Mammary epithelial cell (primary cell): ENCODE measurements at regions of chr2 and their contacts with region 1.

Region 1: GRCh38 chr2:229133155-229133772 is 137.8 kb downstream of the PID1 start:
- DNase-seq: peak; percentile 40
- H3K4me3 ChIP-seq: no peak overlapping the region
- H3K27ac ChIP-seq: no peak overlapping the region
- H3K4me1 ChIP-seq: no peaks in the 10 kb centered on the region
- H3K27me3 ChIP-seq: no peaks in the 10 kb centered on the region
- CTCF ChIP-seq: peak; percentile 46 to 77

Region 2: DNA sequence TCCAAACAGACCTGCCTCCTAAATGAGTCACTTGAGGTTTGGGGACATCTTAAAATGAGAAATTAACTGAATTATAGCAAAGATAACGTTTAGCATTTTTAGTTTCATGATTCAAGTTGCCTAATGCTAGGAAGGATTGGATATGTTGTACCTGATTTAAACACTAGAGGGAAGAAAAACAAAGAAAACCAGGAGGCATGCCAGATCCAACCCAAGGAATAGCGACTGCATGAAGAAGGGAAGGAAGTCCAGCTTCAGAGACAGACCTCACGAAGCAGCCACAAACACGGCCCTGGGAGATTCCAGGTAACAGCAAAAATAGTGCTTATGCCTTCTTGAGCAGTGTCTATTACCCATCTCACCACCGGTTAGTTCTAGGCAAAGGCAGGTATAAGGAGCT is 451.8 kb before region 1 on chr2:
- CTCF ChIA-PET with region 1: no interaction called
- dilution Hi-C with region 1: no loop called
- in situ Hi-C with region 1: no loop called
- intact Hi-C with region 1: loop called (anchors 5 kb)
- DNase-seq: peak; percentile 42
- H3K4me3 ChIP-seq: no peak overlapping the region
- H3K27ac ChIP-seq: no peak overlapping the region
- H3K4me1 ChIP-seq: no peaks in the 10 kb centered on the region
- H3K27me3 ChIP-seq: peaks cover 3% of the 10 kb centered on the region
- CTCF ChIP-seq: peak; percentile 49 to 60

Region 3: GRCh38 chr2:229071292-229071976 is 61.8 kb before region 1 on chr2:
- CTCF ChIA-PET with region 1: no interaction called
- dilution Hi-C with region 1: no loop called
- in situ Hi-C with region 1: no loop called
- intact Hi-C with region 1: no loop called
- DNase-seq: no peak
- H3K4me3 ChIP-seq: no peak overlapping the region
- H3K27ac ChIP-seq: no peak overlapping the region
- H3K4me1 ChIP-seq: no peaks in the 10 kb centered on the region
- H3K27me3 ChIP-seq: no peaks in the 10 kb centered on the region
- CTCF ChIP-seq: no peak

Region 4: DNA sequence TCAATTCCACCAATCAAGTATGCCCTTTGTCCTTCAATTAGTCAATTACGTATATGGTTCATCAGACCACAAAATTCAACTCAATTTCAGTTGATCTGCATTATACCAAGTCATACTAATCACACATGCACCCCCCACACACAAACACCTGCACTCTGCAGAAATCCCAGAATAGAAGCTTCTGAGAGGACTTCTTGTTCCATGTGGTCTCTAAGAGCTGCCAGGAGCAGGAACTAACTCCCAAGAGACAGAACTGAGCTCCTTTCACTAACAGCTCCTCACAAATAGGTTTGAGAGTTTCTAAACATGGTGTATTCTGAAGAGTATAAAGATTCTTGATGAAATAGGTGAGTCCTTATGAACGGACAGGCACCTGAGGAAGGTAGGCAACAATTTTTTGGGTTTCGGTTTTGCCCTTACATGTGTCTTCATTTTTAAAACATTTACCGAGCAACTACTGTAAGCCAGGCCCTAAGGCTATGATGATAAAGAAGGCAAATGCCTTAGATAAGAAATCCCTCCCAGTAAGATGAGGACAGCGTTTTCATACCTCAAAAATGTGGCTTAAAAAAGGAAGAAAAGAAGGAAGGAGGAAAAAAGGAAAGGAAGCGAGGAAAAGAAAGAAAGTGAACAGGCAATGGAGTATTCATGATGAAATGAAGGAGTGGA is 45.3 kb before region 1 on chr2:
- CTCF ChIA-PET with region 1: no interaction called
- dilution Hi-C with region 1: loop called (anchors 5 kb)
- in situ Hi-C with region 1: no loop called
- intact Hi-C with region 1: no loop called
- DNase-seq: no peak
- H3K4me3 ChIP-seq: no peak overlapping the region
- H3K27ac ChIP-seq: no peak overlapping the region
- H3K4me1 ChIP-seq: no peaks in the 10 kb centered on the region
- H3K27me3 ChIP-seq: no peaks in the 10 kb centered on the region
- CTCF ChIP-seq: no peak

Region 5: DNA sequence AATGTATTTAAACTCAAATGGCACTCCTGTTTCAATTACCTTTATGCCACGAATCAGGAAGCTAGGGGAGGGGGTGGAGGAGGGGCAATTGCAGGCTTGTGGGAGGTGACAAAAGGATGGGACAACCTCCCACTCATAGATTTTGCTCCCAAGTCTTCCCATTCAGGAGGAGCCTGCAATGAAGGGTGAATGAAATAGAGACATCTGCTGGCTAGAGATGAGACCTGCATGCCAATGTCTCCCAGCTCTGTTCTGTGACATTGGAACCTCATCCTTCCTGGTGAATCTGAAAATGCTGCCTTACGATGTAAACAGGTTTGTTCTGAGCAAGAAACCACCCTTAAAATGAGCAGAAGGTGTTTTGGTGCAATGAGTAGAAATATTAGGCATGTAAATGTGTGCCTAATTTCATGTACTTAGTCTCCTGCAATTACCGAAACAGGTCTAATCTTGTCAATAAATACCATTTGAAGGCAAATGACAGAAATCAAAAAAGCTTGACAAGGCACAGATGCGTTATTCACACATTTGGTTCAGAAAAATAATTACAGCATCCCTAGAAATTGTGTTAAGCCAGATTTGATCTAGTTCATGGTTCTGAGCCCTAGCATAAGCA is 140.6 kb after region 1 on chr2:
- CTCF ChIA-PET with region 1: no interaction called
- dilution Hi-C with region 1: no loop called
- in situ Hi-C with region 1: no loop called
- intact Hi-C with region 1: loop called (anchors 1 kb)
- DNase-seq: peak; percentile 72
- H3K4me3 ChIP-seq: peak overlapping the region; percentile 14 to 22 (median 21)
- H3K27ac ChIP-seq: no peak overlapping the region
- H3K4me1 ChIP-seq: peaks cover 13% of the 10 kb centered on the region
- H3K27me3 ChIP-seq: no peaks in the 10 kb centered on the region
- CTCF ChIP-seq: peak; percentile 79 to 85

Region 6: DNA sequence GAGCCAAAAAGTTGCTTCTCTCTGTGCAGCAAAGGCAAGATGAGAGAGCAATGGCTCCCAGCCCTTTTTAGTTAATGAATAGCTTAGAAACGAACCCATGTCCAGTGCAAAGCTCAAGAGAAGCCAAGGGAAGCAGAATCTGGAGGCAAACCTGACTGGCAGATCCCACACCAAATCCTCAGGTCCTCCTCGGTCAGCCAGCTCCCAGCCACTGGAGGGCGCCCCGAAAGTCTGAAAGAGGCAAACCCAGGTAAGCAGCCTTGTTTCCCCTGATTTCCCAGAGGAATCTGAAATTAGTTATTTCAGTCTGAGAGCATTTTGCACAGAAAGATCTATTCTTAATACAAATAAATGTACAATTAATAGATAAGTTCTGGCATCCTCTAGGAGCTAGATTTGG is 209.1 kb after region 1 on chr2:
- CTCF ChIA-PET with region 1: no interaction called
- dilution Hi-C with region 1: no loop called
- in situ Hi-C with region 1: no loop called
- intact Hi-C with region 1: loop called (anchors 1 kb)
- DNase-seq: peak; percentile 55
- H3K4me3 ChIP-seq: no peak overlapping the region
- H3K27ac ChIP-seq: no peak overlapping the region
- H3K4me1 ChIP-seq: peaks cover 12% of the 10 kb centered on the region
- H3K27me3 ChIP-seq: no peaks in the 10 kb centered on the region
- CTCF ChIP-seq: peak; percentile 69 to 73

Region 7: DNA sequence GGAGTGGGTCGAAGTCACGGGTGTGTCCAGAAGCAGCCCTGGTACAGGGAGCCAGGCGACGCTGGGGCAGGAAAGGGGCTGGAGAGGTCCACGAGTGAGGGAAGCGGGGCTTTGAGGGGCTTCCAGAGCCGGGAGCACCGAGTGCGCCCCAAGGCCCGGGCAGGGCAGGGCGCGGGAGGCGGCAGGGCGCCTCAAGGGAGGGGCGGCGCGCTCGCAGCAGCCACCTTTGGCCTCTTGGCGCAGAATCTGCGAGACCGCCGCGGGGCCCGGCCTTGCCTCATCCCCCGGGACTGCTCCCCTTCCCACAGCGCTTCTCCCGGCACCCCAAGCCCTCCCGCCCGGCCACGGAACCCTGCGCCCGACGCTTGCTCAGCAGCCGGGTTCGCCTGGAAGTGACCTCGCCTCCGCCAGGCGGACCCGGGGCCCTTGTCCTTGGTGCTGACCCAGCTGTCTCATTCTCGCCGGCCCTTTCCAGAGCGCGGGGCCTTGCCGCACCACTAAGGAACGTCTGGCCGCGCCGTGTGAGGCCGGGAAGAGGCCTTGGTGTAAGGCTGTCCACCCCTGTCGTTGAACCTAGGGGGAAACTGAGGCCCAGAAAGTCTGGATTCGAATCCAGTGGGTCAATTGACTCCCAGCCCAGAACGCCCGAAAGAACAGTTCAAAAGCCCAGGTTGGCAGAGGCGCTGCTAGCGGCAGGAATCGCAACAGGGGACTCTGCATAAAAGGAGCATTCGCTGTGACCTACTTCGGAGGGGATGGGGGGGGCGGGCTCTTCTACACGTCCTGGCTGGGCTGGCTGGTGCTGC is 581.7 kb after region 1 on chr2:
- CTCF ChIA-PET with region 1: no interaction called
- dilution Hi-C with region 1: no loop called
- in situ Hi-C with region 1: no loop called
- intact Hi-C with region 1: loop called (anchors 1 kb)
- DNase-seq: peak; percentile 56
- H3K4me3 ChIP-seq: peak overlapping the region; percentile 40 to 51 (median 45)
- H3K27ac ChIP-seq: no peak overlapping the region
- H3K4me1 ChIP-seq: peaks cover 20% of the 10 kb centered on the region
- H3K27me3 ChIP-seq: peaks cover 31% of the 10 kb centered on the region
- CTCF ChIP-seq: no peak